ENCODE measurements at regions of chr16 and their contacts with region 1.

Region 1: GRCh38 chr16:84084570-84085270 is 32.0 kb downstream of the MBTPS1 start:
- DNase-seq: no peak

Region 2: DNA sequence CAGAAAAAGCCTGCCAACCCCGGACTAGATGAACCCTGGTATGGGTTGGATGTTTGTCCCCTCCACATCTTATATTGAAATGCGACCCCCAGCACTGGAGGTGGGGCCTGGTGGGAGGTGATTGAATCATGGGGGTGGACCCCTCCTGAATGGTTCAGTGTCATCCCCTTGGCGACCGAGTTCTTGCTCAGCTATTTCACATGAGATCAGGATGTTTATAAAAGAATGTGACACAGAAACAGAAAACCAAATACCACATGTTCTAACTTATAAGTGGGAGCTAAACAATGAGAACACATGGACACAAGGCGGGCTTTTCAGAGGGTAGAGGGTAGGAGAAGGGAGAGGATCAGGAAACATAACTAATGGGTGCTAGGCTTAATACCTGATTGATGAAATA is 853.0 kb before region 1 on chr16:
- intact Hi-C with region 1: no loop called
- DNase-seq: no peak

Region 3: GRCh38 chr16:84071121-84071520 is 13.6 kb before region 1 on chr16:
- intact Hi-C with region 1: loop called in 1 of 2 experiments (anchors 1 kb)
- DNase-seq: no peak

Region 4: DNA sequence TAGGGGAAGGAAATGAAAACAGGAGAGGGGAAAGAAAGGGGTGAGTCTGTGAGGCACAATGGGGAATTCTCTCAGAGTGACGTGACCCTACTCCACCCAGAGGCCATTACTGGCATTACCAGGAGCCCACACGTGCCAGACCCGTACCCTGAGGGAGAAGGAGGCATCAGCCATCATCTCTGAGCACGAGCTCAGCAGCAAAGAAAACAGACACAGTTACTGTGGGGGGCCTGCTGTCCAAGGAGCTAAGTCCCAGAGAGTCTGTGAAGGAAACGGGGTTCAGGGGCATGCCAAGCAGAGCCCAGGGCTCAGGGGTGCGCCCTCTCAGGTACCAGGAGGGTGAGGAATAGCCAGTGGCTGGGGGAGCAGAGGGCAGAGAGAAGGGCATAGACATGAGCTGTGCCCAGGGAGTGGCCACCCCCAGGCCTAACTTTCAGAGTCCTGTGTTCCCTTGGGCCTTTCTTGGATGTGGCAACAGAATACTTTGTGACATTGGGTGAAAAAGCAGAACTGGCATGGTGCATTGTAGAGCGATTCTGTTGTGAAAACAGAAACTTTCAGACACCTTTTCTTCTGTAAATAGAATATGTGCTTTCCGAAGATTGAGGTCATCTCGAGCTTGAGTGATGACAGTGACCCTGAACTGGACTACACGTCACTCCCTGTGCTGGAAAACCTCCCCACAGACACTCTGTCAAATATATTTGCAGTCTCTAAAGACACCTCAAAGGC is 90.8 kb after region 1 on chr16:
- intact Hi-C with region 1: loop called in 1 of 2 experiments (anchors 10 kb)
- DNase-seq: no peak

Measured in posterior vena cava (tissue), 2 donors.